OCI-LY7 (cell line): ENCODE measurements at regions of chr12 and their contacts with region 1.

Region 1: DNA sequence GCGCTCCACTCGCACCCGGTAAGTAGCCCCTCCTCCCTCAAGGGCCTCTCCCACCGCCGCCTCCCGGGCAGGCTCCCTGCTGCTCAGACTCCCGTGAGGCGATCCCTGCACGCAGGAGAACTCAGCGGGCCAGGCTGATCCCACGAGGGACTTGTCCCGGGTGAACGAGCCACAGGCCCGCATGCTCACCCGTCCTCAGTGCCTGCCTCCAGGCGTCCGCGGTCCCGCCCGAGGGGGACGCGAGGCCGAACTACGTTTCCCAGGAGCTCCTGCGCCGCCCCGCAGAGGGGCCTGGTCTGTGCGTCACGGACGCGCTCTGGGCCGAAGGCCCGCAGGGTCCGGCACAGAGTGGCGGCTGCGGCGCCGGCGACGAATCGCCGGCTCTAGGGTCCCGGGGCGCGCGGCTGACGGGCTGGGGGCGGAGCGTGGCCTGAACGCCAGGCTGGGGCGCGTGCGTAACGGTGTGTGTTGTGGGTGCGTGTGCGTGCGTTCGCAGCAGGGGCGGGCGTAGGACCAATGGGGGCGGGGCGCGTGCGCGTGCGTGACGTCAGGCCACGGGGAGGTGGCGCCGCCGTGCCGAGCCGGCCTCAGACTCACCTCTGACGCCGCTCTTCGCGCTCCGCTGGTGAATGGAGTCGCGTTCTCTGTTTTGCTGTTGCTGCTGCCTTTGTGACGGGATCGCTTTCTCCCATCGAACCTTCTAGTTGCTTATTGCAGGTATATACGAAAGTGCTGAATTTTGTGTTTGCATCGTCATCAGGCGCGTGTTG is at the starts of genes ZNF10 and ZNF891:
- DNase-seq: peak; percentile 94
- H3K4me3 ChIP-seq: peak within 1 kb of the TSS; percentile 79
- H3K27ac ChIP-seq: peak within 1 kb of the TSS; percentile 62
- H3K4me1 ChIP-seq: no peaks in the 10 kb centered on the region
- CTCF ChIP-seq: no peak
- total RNA-seq, gene ZNF10: 5.9 and 8.0 TPM in 2 replicates
- total RNA-seq, gene ZNF891: 3.1 and 3.2 TPM in 2 replicates

Region 2: DNA sequence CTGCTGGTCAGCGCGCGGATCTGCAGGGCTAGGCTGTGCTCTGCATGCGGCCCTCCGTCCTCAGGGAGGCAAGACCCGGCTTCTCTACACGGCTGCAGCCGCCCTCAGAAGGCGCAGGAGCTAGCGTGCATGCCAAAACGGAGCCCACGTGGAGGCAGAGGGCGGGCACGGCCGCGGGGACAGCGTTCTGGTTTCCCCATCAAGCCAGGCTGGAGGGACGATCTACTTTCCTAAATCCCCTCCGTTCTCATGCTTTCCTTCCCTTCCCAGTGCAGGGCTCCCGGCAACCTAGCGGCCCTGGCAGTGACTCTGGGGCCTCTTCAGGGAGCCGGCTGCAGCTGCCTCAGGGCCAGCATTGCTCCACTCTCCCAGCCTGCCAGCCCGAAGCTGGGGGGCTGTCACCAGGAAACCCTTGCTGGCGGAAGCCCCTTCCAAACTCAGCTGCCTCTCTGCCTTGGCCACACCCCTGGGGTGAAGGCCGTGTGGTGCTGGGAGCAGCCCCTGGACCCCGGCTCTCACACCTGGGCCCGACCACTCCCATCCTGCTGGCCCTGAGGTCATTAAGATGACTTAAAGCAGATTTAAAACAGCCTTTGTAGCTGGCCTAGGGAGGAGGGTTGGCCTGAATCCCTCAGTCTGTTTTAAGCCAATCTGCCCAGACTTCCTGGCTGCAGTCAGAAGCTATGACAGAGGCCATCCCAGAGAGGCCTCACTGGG is 292.4 kb before region 1 on chr12:
- CTCF ChIA-PET with region 1: no interaction called
- POLR2A ChIA-PET with region 1: no interaction called
- intact Hi-C with region 1: no loop called
- DNase-seq: no peak
- H3K4me3 ChIP-seq: no peak overlapping the region
- H3K27ac ChIP-seq: peak overlapping the region; percentile 48
- H3K4me1 ChIP-seq: peaks cover 10% of the 10 kb centered on the region
- CTCF ChIP-seq: no peak

Region 3: GRCh38 chr12:133106253-133106652 is 24.0 kb before region 1 on chr12:
- CTCF ChIA-PET with region 1: no interaction called
- POLR2A ChIA-PET with region 1: no interaction called
- intact Hi-C with region 1: no loop called
- DNase-seq: no peak
- H3K4me3 ChIP-seq: no peak overlapping the region
- H3K27ac ChIP-seq: no peak overlapping the region
- H3K4me1 ChIP-seq: no peaks in the 10 kb centered on the region
- CTCF ChIP-seq: no peak

Region 4: GRCh38 chr12:133181238-133181959 is 51.2 kb after region 1 on chr12 and contains the start of gene ZNF268:
- CTCF ChIA-PET with region 1: no interaction called
- POLR2A ChIA-PET with region 1: interaction called, 4 read pairs
- intact Hi-C with region 1: loop called (anchors 1 kb)
- DNase-seq: peak; percentile 98
- H3K4me3 ChIP-seq: peak within 1 kb of the TSS; percentile 82
- H3K27ac ChIP-seq: peak within 1 kb of the TSS; percentile 40
- H3K4me1 ChIP-seq: peaks cover 7% of the 10 kb centered on the region
- CTCF ChIP-seq: peak; percentile 90
- total RNA-seq, gene ZNF268: 7.7 and 19.1 TPM in 2 replicates